Naive thymus-derived CD8-positive, alpha-beta T cell (primary cell): ENCODE measurements at regions of chr1 and their contacts with region 1.

Region 1: GRCh38 chr1:26233903-26234643 is at the start of gene CEP85:
- DNase-seq: peak; percentile 95 to 99 (median 98)
- ATAC-seq: peak; percentile 89 to 92
- H3K4me3 Mint-ChIP-seq: peak within 1 kb of the TSS; percentile 92 to 99 (median 98)
- H3K27ac Mint-ChIP-seq: peak within 1 kb of the TSS; percentile 80 to 98 (median 96)
- H3K4me1 Mint-ChIP-seq: peaks cover 19 to 40% (median 35%) of the 10 kb centered on the region in 4 donors
- H3K27me3 Mint-ChIP-seq: no peaks in the 10 kb centered on the region
- polyA plus RNA-seq, gene CEP85: 3.9 to 9.8 (median 5.1) TPM

Region 2: GRCh38 chr1:26111530-26112406 is 122.3 kb before region 1 on chr1 and contains the start of gene PDIK1L:
- POLR2A ChIA-PET with region 1: interaction called, 10 read pairs
- DNase-seq: peak; percentile 90 to 98 (median 94)
- ATAC-seq: peak; percentile 80 to 89
- H3K4me3 Mint-ChIP-seq: peak within 1 kb of the TSS; percentile 91 to 98 (median 94)
- H3K27ac Mint-ChIP-seq: peak within 1 kb of the TSS; percentile 82 to 97 (median 95)
- H3K4me1 Mint-ChIP-seq: peaks cover 14 to 33% (median 23%) of the 10 kb centered on the region in 4 donors
- H3K27me3 Mint-ChIP-seq: no peaks in the 10 kb centered on the region
- polyA plus RNA-seq, gene PDIK1L: 3.5 to 5.1 (median 3.7) TPM

Region 3: DNA sequence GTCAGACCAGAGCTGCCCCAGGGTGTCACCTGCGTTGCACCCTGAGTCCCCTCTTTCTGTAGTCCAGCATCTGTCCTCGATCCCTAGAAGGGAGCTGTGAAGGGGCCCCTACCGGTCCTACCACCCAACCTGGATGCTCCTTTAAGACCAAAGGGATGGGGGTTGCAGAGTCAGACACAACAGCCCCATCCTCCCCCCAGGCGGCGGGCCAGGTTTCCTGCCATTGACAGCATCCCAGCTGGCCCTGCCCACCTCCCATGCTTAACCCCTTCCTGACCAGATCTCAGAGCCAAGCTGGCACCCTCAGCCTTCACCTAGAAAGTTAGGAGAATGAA is 77.4 kb before region 1 on chr1:
- POLR2A ChIA-PET with region 1: no interaction called
- DNase-seq: peak in 1 of 10 donors; percentile 21
- ATAC-seq: peak; percentile 41 to 49
- H3K4me3 Mint-ChIP-seq: peak overlapping the region in 1 of 10 donors; percentile 26
- H3K27ac Mint-ChIP-seq: no peak overlapping the region
- H3K4me1 Mint-ChIP-seq: peaks cover 3 to 9% (median 5%) of the 10 kb centered on the region in 4 donors
- H3K27me3 Mint-ChIP-seq: peaks cover 0 to 40% (median 14%) of the 10 kb centered on the region in 5 donors

Region 4: GRCh38 chr1:26169669-26170471 is 64.2 kb before region 1 on chr1 and contains the start of gene ZNF593:
- POLR2A ChIA-PET with region 1: interaction called, 26 read pairs
- DNase-seq: peak; percentile 69 to 88 (median 76)
- ATAC-seq: peak; percentile 91 to 93
- H3K4me3 Mint-ChIP-seq: peak within 1 kb of the TSS; percentile 81 to 91 (median 87)
- H3K27ac Mint-ChIP-seq: peak within 1 kb of the TSS; percentile 60 to 93 (median 90)
- H3K4me1 Mint-ChIP-seq: peaks cover 6 to 15% (median 12%) of the 10 kb centered on the region in 4 donors
- H3K27me3 Mint-ChIP-seq: peaks cover 0 to 4% (median 0%) of the 10 kb centered on the region in 5 donors
- polyA plus RNA-seq, gene ZNF593: 23.4 to 26.0 (median 24.7) TPM

Region 5: DNA sequence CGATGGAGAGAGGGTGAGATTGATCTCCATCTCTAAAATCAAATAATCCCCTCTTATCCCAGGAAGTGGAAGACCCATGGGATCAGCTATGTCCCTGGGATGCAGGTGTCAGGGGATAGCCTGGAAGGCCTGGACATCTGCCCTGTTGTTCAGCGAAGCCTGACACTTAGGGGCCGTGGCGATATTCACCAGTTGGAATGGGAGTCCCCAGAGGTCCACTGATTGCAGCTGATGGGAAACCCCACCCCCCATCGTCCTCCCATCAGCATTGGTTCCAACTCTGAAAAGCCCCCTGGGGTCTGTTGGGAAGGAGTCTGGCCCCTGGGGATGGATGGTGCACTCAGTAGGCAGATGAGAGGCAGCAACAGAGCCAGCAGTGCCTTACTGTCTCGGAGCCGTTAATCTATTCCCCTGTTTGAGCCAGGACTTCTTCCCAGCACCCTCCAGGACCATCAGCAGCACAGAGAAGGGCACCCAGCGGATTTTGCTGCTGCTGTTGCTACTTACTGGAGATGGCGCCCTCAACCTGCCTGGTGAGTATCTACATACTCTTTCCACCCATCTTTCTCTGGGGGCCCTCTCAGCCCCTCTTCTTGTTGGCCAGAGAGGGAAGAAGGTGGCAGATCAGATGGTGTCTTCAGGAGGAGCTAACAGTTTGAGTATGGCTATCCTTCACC is 30.3 kb before region 1 on chr1:
- POLR2A ChIA-PET with region 1: interaction called, 13 read pairs
- DNase-seq: no peak
- ATAC-seq: no peak
- H3K4me3 Mint-ChIP-seq: no peak overlapping the region
- H3K27ac Mint-ChIP-seq: peak overlapping the region in 2 of 10 donors; percentile 84
- H3K4me1 Mint-ChIP-seq: peaks cover 3 to 30% (median 25%) of the 10 kb centered on the region in 4 donors
- H3K27me3 Mint-ChIP-seq: peaks cover 0 to 2% (median 0%) of the 10 kb centered on the region in 5 donors

Region 6: DNA sequence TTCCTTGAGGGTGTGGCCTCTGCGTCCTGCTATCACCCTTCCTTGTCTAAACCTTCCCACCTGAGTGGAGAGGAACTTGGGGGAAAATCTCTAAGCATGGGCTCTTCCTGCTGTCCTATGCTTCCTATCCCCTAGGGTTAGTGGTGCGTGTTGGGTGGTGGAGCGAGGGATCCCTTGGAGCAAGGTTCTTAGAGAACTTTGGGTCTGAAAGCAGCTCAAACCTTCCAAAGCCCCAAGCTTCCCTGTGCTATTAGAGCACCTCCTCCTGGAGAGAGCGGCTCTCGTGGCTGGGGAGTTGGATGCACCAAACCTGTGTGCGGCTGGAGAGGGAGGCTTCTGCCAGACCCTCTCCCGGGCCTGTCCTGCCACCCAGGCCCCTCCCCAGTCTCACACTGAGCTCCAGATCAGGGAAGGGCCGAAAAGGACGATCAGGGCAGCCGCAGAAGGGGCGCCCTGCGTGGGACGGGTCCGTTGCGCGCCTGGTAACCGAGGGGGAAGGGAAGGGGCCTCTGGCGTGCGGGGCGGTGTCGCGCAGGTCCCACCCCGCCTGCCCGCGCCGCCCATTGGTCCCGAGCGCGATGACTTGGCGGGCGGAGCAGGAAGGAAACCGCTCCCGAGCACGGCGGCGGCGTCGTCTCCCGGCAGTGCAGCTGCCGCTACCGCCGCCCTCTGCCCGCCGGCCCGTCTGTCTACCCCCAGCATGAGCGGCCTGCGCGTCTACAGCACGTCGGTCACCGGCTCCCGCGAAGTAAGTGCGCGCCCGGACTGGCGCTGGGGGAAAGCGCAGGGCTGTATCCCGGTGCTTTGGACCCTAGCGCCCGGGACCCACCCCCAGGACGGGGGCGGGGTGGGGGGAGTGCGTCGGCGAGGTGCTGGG is 45.6 kb after region 1 on chr1 and contains the start of gene SH3BGRL3:
- POLR2A ChIA-PET with region 1: interaction called, 21 read pairs
- DNase-seq: peak; percentile 73 to 89 (median 82)
- ATAC-seq: peak; percentile 66 to 70
- H3K4me3 Mint-ChIP-seq: peak within 1 kb of the TSS; percentile 86 to 95 (median 93)
- H3K27ac Mint-ChIP-seq: peak within 1 kb of the TSS; percentile 93 to 100 (median 96)
- H3K4me1 Mint-ChIP-seq: peaks cover 46 to 89% (median 87%) of the 10 kb centered on the region in 4 donors
- H3K27me3 Mint-ChIP-seq: no peaks in the 10 kb centered on the region
- polyA plus RNA-seq, gene SH3BGRL3: 805 to 925 (median 916) TPM

Region 7: DNA sequence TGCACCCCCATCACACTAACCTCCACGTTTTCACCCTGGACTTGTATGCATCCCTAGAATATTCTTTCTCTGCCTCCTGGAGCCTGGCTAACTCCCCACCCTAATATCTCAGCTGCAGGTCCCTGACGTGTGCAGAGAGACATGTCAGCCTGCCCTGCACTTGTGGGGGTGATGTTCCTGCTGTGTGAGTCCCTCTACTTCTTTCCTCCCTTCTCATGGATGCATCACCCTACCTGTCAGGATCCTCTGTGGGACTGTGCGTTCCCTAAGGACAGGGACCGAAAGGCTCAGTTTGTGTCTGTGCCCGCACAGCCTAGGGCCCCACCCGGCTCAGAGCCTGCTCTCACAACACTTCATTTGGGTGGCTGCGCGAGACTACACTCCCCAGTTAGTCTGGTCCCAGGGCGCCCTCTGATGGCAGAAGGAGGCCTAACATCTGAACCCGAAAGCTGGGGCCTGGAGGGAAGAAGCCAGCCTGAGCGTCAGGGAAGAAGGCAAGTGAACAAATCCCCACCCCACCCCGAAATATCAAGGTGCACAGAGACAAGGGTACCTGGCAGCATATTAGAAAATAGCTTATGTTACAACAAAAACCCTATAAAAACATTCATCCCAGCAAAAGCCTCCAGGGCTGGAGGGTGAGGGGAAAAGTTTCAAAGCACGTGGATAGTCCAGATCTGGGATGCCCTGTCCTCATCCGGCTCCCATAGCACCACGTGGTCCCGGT is 87.4 kb after region 1 on chr1:
- POLR2A ChIA-PET with region 1: interaction called, 23 read pairs
- DNase-seq: peak; percentile 86 to 98 (median 92)
- ATAC-seq: peak; percentile 66 to 81
- H3K4me3 Mint-ChIP-seq: peak overlapping the region; percentile 79 to 100 (median 94)
- H3K27ac Mint-ChIP-seq: peak overlapping the region; percentile 87 to 99 (median 94)
- H3K4me1 Mint-ChIP-seq: peaks cover 28 to 70% (median 64%) of the 10 kb centered on the region in 4 donors
- H3K27me3 Mint-ChIP-seq: no peaks in the 10 kb centered on the region

Region 8: DNA sequence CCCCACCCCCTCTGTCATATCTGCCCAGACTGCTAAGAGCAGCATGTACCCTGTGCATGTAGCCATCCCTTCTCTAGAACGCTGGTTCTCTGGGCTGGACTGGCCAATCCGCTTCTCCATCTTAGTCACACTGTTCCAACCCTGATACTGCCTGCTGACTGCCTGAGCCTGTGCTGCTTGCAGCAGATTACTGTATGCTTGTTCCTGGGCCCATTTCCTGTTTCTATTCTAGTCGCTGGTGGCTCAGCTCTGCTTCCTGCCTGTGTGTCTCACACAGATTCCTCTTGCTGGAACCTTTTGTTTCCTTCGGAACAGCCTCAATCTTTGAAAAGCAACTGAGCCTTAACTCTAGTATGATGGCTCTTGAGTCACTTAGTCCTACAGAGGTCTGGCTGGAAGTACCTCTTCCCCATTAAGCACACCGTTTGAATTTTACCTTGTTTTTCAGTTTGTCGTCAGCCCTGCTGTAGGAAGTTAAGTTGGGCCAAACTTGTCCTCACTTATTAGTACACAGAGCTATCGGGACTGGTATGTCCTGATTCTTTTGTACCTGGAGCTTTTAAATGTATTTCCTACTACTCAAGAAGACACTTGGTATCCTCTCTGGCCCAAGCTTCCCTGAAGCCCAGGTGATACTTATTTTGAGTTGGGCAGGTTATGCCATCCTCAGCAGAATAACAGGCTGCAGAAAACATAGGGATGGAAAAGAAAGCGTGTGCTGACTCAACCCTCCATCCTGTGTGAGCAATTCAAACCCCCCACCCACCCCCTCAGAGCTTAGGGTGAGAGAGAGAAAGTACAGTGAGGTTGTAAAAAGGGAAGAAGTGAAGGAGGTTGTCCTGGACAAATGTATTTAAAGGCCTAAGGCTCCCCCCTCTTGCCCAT is 510.2 kb after region 1 on chr1:
- POLR2A ChIA-PET with region 1: no interaction called
- DNase-seq: peak; percentile 39 to 87 (median 74)
- ATAC-seq: peak; percentile 90 to 94
- H3K4me3 Mint-ChIP-seq: peak overlapping the region; percentile 60 to 86 (median 78)
- H3K27ac Mint-ChIP-seq: peak overlapping the region; percentile 87 to 96 (median 93)
- H3K4me1 Mint-ChIP-seq: peaks cover 43 to 93% (median 83%) of the 10 kb centered on the region in 4 donors
- H3K27me3 Mint-ChIP-seq: no peaks in the 10 kb centered on the region